ENCODE measurements at regions of chr7 and their contacts with region 1.

Region 1: DNA sequence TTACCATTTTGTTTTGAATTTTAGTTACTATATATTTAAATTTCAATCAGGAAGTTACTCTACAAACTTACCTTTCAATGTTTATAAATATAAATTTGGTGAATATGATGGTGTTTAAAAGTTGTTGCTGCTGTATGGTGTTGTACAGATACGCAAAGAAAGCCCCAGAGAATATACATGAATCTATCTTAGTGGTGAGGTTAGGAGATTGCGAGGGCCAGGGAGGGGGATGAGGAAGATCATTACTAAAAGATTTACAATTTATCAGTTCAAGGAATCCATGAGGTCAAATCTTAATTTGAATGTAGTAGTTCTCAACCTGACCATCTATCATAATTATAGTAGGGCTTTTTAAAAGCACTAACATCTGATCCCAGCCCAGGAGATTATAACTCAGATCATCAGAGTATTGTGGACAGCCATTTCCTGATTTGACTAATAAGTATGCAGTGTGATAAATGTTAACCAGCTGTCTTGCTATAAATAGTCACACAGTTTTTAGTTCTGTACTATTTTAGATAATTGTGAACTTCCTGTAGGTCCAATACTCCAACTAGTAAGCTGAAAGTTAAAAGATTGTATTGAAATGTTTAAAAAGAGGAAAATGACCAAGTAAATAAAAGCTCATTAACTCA is 23.6 kb downstream of the FAM3C start:
- DNase-seq: peak; percentile 73
- ATAC-seq: peak; percentile 88
- H3K4me3 ChIP-seq: no peak overlapping the region
- H3K27ac ChIP-seq: peak overlapping the region; percentile 58
- H3K4me1 ChIP-seq: peaks cover 32% of the 10 kb centered on the region
- H3K27me3 ChIP-seq: no peaks in the 10 kb centered on the region
- CTCF ChIP-seq: no peak
- EP300 ChIP-seq: peak; percentile 37 to 91; a peak in 3 of 4 replicates
- POLR2A ChIP-seq: no peak
- RAD21 ChIP-seq: 0 out of 2 replicates have a peak, but pooled peaks have one; percentile 6

Region 2: GRCh38 chr7:120486164-120486563 is 886.3 kb before region 1 on chr7:
- CTCF ChIA-PET with region 1: no interaction called
- POLR2A ChIA-PET with region 1: no interaction called
- RAD21 ChIA-PET with region 1: no interaction called
- SMC1A ChIA-PET with region 1: no interaction called
- in situ Hi-C with region 1: no loop called
- intact Hi-C with region 1: no loop called
- DNase-seq: no peak
- ATAC-seq: no peak
- H3K4me3 ChIP-seq: no peak overlapping the region
- H3K27ac ChIP-seq: no peak overlapping the region
- H3K4me1 ChIP-seq: no peaks in the 10 kb centered on the region
- H3K27me3 ChIP-seq: no peaks in the 10 kb centered on the region
- CTCF ChIP-seq: no peak
- EP300 ChIP-seq: no peak
- POLR2A ChIP-seq: no peak
- RAD21 ChIP-seq: no peak

Region 3: GRCh38 chr7:121385800-121386179 is 13.3 kb after region 1 on chr7:
- CTCF ChIA-PET with region 1: interaction called, 87 read pairs
- POLR2A ChIA-PET with region 1: interaction called, 81 read pairs
- RAD21 ChIA-PET with region 1: interaction called, 272 read pairs
- SMC1A ChIA-PET with region 1: interaction called, 281 read pairs
- in situ Hi-C with region 1: no loop called
- intact Hi-C with region 1: no loop called
- DNase-seq: peak; percentile 76
- ATAC-seq: peak; percentile 79
- H3K4me3 ChIP-seq: no peak overlapping the region
- H3K27ac ChIP-seq: peak overlapping the region; percentile 92
- H3K4me1 ChIP-seq: peaks cover 43% of the 10 kb centered on the region
- H3K27me3 ChIP-seq: no peaks in the 10 kb centered on the region
- CTCF ChIP-seq: no peak
- EP300 ChIP-seq: peak; percentile 87 to 94; a peak in 3 of 4 replicates
- POLR2A ChIP-seq: no peak
- RAD21 ChIP-seq: no peak

Region 4: GRCh38 chr7:121440857-121441503 is 68.5 kb after region 1 on chr7:
- CTCF ChIA-PET with region 1: interaction called, 4 read pairs
- POLR2A ChIA-PET with region 1: no interaction called
- RAD21 ChIA-PET with region 1: interaction called, 11 read pairs
- SMC1A ChIA-PET with region 1: interaction called, 14 read pairs
- in situ Hi-C with region 1: no loop called
- intact Hi-C with region 1: loop called (anchors 2 kb)
- DNase-seq: no peak
- ATAC-seq: peak; percentile 43
- H3K4me3 ChIP-seq: peak overlapping the region; percentile 31; the same call in 1 of the 2 replicates
- H3K27ac ChIP-seq: peak overlapping the region; percentile 58
- H3K4me1 ChIP-seq: 0 out of 2 replicates have a peak, but pooled peaks cover 7% of the 10 kb centered on the region
- H3K27me3 ChIP-seq: no peaks in the 10 kb centered on the region
- CTCF ChIP-seq: no peak
- EP300 ChIP-seq: no peak
- POLR2A ChIP-seq: no peak
- RAD21 ChIP-seq: no peak